Endothelial cell of umbilical vein (primary cell): ENCODE measurements at regions of chr4 and their contacts with region 1.

Region 1: GRCh38 chr4:154559494-154560418 is 3.1 kb upstream of the FGB start:
- DNase-seq: peak; percentile 53
- H3K4me3 ChIP-seq: no peak overlapping the region
- H3K27ac ChIP-seq: no peak overlapping the region
- H3K4me1 ChIP-seq: no peaks in the 10 kb centered on the region
- H3K27me3 ChIP-seq: peaks cover 0 to 12% of the 10 kb centered on the region in 2 experiments
- CTCF ChIP-seq: peak; percentile 40 to 49
- POLR2A ChIP-seq: no peak

Region 2: GRCh38 chr4:154574311-154574710 is 14.6 kb after region 1 on chr4:
- CTCF ChIA-PET with region 1: interaction called, 12 read pairs
- POLR2A ChIA-PET with region 1: no interaction called
- dilution Hi-C with region 1: no loop called
- intact Hi-C with region 1: no loop called
- DNase-seq: no peak
- H3K4me3 ChIP-seq: no peak overlapping the region
- H3K27ac ChIP-seq: no peak overlapping the region
- H3K4me1 ChIP-seq: no peaks in the 10 kb centered on the region
- H3K27me3 ChIP-seq: no peaks in the 10 kb centered on the region
- CTCF ChIP-seq: no peak
- POLR2A ChIP-seq: no peak

Region 3: DNA sequence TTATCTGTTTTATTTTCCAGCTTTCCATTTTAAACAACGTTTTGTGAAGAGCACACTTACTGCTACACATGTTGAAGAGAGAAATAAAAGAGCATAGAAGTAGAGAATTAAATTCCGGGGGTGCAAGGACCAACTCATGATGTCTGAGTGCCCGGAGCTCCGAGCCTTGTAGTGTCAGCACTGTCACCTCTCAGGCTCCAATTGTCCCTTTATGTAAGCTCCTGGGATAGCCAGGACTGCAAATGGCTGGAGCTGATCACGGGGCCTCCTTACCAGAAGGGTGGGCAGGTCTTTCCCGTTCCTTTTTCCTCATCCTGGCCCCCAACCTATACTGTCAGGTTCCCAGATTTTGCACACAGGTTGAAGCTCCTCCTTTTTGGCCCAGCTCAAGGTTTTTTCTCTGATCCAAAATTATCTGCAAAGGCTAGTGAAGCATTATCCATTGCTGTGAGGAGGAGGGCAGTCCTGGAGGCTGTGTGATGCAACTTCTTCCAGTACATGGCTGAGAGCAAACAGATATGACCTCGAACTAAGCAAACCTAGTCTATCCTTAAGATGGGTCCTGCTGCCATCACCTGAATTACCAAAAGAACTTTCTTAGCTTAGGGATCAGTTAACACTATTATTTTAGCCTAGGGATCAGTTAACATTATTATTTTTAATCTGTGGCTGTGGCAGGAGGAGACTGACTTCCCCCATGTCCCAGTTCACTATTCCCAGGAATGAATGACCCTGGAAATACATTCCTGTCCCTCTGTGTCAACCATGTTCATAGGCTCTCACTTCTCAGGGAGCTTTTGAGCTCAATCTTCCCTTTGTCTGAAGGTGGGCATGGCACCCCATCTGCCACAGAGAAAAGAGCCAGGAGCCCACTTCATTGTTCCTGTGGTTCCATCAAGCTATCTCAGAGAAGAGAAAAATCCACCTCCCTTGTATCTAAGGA is 53.0 kb after region 1 on chr4 and contains the start of gene FGG:
- CTCF ChIA-PET with region 1: interaction called, 112 read pairs
- POLR2A ChIA-PET with region 1: no interaction called
- dilution Hi-C with region 1: no loop called
- intact Hi-C with region 1: no loop called
- DNase-seq: no peak
- H3K4me3 ChIP-seq: no peak within 1 kb of the TSS
- H3K27ac ChIP-seq: no peak within 1 kb of the TSS
- H3K4me1 ChIP-seq: no peaks in the 10 kb centered on the region
- H3K27me3 ChIP-seq: peaks cover 0 to 7% of the 10 kb centered on the region in 2 experiments
- CTCF ChIP-seq: no peak
- POLR2A ChIP-seq: no peak
- total RNA-seq, gene FGG: not detected in 2 replicates

Region 4: DNA sequence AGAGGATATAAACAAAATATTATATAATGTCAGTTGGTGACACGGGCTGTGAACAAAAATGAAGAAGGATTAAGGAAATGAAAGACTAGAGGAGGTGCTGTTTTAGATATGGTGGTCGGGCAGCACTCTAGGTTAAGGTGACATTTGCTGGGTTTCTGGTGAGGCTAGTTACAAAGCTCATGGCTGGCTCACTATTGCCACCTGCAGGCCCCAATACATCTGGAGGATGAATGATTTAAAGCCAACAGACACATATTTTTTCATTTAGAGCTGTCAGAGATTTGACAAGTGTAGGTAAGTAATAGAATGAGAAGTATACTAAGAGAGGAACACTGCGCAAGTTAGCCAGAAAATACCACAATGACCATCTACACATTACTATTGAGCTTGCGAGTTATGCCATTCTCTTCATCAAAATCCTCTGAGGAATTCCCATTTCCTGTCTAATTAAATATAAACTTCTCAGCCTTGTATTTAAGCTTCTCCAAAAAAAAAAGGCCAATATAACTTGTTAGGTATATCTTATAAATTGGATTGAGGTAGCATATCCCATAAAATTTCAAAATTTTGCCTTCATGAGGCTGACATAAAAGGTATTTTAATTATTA is 59.1 kb after region 1 on chr4:
- CTCF ChIA-PET with region 1: interaction called, 112 read pairs
- POLR2A ChIA-PET with region 1: no interaction called
- dilution Hi-C with region 1: no loop called
- intact Hi-C with region 1: no loop called
- DNase-seq: peak; percentile 52
- H3K4me3 ChIP-seq: no peak overlapping the region
- H3K27ac ChIP-seq: no peak overlapping the region
- H3K4me1 ChIP-seq: no peaks in the 10 kb centered on the region
- H3K27me3 ChIP-seq: peaks cover 0 to 4% of the 10 kb centered on the region in 2 experiments
- CTCF ChIP-seq: peak; percentile 58 to 64
- POLR2A ChIP-seq: no peak

Region 5: GRCh38 chr4:154779362-154779947 is 219.7 kb after region 1 on chr4:
- CTCF ChIA-PET with region 1: interaction called, 11 read pairs
- POLR2A ChIA-PET with region 1: no interaction called
- dilution Hi-C with region 1: no loop called
- intact Hi-C with region 1: no loop called
- DNase-seq: peak; percentile 18
- H3K4me3 ChIP-seq: no peak overlapping the region
- H3K27ac ChIP-seq: no peak overlapping the region
- H3K4me1 ChIP-seq: no peaks in the 10 kb centered on the region
- H3K27me3 ChIP-seq: peaks cover 0 to 2% of the 10 kb centered on the region in 2 experiments
- CTCF ChIP-seq: peak; percentile 21 to 30
- POLR2A ChIP-seq: no peak

Region 6: GRCh38 chr4:155047755-155048154 is 488.0 kb after region 1 on chr4:
- CTCF ChIA-PET with region 1: no interaction called
- POLR2A ChIA-PET with region 1: no interaction called
- dilution Hi-C with region 1: no loop called
- intact Hi-C with region 1: no loop called
- DNase-seq: peak; percentile 94
- H3K4me3 ChIP-seq: no peak overlapping the region
- H3K27ac ChIP-seq: peak overlapping the region; percentile 38
- H3K4me1 ChIP-seq: peaks cover 12% of the 10 kb centered on the region
- H3K27me3 ChIP-seq: no peaks in the 10 kb centered on the region
- CTCF ChIP-seq: no peak
- POLR2A ChIP-seq: no peak